ENCODE measurements at regions of chr7 and their contacts with region 1.

Region 1: GRCh38 chr7:7870555-7870954 is 98.0 kb upstream of the GLCCI1 start:
- DNase-seq: no peak
- ATAC-seq: peak; percentile 33 to 70 (median 57)
- H3K4me3 ChIP-seq: no peak overlapping the region
- H3K27ac ChIP-seq: no peak overlapping the region
- H3K4me1 ChIP-seq: peaks cover 0 to 43% (median 21%) of the 10 kb centered on the region in 12 donors
- H3K27me3 ChIP-seq: no peaks in the 10 kb centered on the region
- CTCF ChIP-seq: no peak
- POLR2A ChIP-seq: no peak

Region 2: DNA sequence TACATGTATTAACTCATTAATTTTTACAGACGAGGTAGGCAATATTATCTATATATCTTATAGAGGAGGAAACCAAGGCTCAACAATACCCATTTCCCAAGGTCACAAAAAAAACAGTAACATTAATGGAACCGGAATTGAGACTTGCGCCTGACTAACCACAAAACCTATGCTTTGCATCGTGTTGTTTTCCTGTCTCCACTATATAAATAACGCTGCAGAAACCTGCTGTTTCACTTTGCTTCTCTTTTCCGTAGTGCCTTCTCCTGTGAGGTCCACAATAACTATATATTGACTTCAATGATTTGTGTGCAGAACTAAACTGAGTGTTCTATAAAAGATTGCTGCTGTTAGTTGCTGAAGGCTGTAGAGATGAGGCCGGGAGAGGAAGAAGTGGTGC is 54.5 kb before region 1 on chr7:
- intact Hi-C with region 1: loop called in 1 of 10 experiments (anchors 10 kb)
- DNase-seq: no peak
- ATAC-seq: no peak
- H3K4me3 ChIP-seq: no peak overlapping the region
- H3K27ac ChIP-seq: no peak overlapping the region
- H3K4me1 ChIP-seq: peaks cover 0 to 15% (median 0%) of the 10 kb centered on the region in 12 donors
- H3K27me3 ChIP-seq: no peaks in the 10 kb centered on the region
- CTCF ChIP-seq: no peak
- POLR2A ChIP-seq: no peak

Region 3: DNA sequence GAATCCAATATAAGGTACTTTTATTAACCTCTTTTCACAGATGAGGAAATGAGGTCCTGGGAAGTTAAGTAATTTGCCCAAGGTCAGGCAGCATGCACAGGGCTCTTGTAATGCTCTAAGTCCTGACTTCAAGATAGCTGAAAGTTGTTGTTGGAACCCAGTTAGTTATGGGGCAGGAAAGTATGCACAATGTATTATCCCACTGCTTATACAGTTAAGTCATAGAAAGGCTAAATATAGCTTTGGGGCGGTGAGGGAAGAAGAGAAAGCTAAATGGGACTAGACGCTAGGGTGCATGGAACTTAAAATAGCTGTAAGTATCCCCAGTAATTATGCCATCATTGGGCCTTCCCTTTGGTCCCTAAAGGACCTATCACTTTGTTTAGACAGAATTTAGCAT is 107.2 kb after region 1 on chr7:
- intact Hi-C with region 1: no loop called
- DNase-seq: no peak
- ATAC-seq: peak in 3 of 4 donors; percentile 26 to 48 (median 39)
- H3K4me3 ChIP-seq: no peak overlapping the region
- H3K27ac ChIP-seq: no peak overlapping the region
- H3K4me1 ChIP-seq: peaks cover 0 to 36% (median 7%) of the 10 kb centered on the region in 12 donors
- H3K27me3 ChIP-seq: no peaks in the 10 kb centered on the region
- CTCF ChIP-seq: no peak
- POLR2A ChIP-seq: no peak